K562 (cell line): ENCODE measurements at regions of chr18 and their contacts with region 1.

Region 1: DNA sequence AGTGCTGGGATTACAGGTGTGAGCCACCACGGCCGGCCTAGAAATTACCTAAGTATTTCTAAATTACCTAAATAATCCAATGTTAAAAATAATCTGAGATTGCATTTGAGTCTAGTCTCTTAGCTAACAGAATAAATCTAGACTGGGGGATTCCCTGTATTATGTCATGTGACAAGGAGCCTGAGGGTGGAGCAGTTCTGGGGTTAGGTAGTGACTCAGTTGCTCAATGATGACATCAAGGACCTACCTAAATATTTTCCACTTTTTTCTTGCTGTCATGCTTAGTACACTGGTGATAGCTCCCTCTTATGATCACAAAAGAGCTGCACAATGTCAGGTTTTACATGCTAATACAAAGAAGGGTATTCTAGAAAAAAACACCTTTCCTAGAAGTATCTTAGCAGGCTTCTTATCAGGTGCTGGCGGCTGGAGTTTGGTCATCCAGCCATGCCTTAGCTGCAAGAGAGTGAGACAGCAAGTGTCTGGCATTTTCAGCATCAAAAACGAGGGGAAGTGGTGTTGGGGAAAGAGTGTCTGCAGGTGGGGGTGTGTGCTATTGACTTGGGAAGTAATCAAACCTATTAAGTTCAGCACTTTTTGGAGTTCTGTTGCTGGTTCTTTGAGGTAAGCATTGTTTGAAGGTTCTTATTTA is 17.5 kb upstream of the CEP192 start:
- DNase-seq: peak in 1 of 4 experiments; percentile 31
- ATAC-seq: peak; percentile 33; the same call in 1 of the 3 replicates
- H3K4me3 ChIP-seq: no peak overlapping the region
- H3K27ac ChIP-seq: no peak overlapping the region
- H3K4me1 ChIP-seq: no peaks in the 10 kb centered on the region; a peak in 1 of 5 replicates
- H3K27me3 ChIP-seq: no peaks in the 10 kb centered on the region
- CTCF ChIP-seq: no peak
- EP300 ChIP-seq: no peak
- POLR2A ChIP-seq: no peak
- RAD21 ChIP-seq: no peak

Region 2: GRCh38 chr18:12960853-12961397 is 12.8 kb before region 1 on chr18:
- CTCF ChIA-PET with region 1: no interaction called
- POLR2A ChIA-PET with region 1: interaction called, 12 read pairs
- in situ Hi-C with region 1: no loop called
- intact Hi-C with region 1: no loop called
- DNase-seq: no peak
- ATAC-seq: peak; percentile 52
- H3K4me3 ChIP-seq: no peak overlapping the region
- H3K27ac ChIP-seq: peak overlapping the region; percentile 45; the same call in 2 of the 3 replicates
- H3K4me1 ChIP-seq: peaks cover 0 to 17% of the 10 kb centered on the region in 2 experiments; a peak in 4 of 5 replicates
- H3K27me3 ChIP-seq: no peaks in the 10 kb centered on the region
- CTCF ChIP-seq: no peak
- EP300 ChIP-seq: no peak
- POLR2A ChIP-seq: no peak
- RAD21 ChIP-seq: no peak